CD4-positive, alpha-beta T cell (primary cell): ENCODE measurements at regions of chr6 and their contacts with region 1.

Region 1: DNA sequence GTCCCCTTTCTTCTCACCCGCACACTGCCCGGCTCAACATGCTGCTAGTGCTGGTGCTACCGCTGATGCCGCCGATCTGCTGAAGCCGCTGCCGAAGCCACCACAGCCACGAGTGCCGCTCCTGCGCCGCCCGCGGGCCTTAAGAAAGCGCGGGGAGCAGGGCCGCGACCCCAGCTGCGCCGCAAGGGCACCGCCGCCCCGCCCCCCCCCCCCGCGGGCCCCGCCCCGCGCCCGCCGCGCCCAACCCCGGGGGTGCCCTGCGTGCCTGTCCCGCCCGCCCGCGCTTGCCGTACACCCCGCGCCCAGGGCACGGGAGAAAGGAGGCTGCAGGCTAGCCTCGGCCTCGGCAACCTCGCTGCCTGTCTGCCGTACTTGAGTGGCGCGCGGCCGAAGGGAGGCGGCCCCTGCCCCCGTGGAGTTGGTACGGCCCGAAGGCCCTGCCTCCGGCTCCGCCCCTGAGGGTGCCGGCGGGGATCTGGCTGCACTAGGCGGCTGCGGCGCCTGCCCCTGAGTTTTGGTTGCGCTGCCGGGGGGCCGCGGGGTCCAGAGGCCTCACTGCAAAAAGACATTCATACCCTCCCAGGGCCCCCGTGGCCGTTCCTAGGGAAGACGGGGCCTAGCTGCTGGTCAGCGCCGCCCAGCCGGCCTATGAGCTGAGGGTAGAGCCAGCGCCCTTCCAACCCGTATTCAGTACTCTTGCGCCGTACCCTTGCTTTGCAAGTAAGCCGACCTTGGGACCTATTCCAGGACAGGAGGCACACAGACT is at the start of gene SOD2:
- DNase-seq: peak; percentile 72 to 93 (median 80)
- ATAC-seq: peak; percentile 69
- H3K4me3 ChIP-seq: peak within 1 kb of the TSS; percentile 90
- H3K4me3 Mint-ChIP-seq: peak within 1 kb of the TSS; percentile 98
- H3K27ac ChIP-seq: peak within 1 kb of the TSS; percentile 76 to 92
- H3K27ac Mint-ChIP-seq: peak within 1 kb of the TSS; percentile 88
- H3K4me1 ChIP-seq: peaks cover 47% of the 10 kb centered on the region
- H3K4me1 Mint-ChIP-seq: peaks cover 51% of the 10 kb centered on the region
- H3K27me3 ChIP-seq: no peaks in the 10 kb centered on the region
- H3K27me3 Mint-ChIP-seq: no peaks in the 10 kb centered on the region
- CTCF ChIP-seq: no peak
- total RNA-seq, gene SOD2: 182 to 195 TPM

Region 2: GRCh38 chr6:159595173-159595572 is 98.1 kb before region 1 on chr6:
- CTCF ChIA-PET with region 1: no interaction called
- POLR2A ChIA-PET with region 1: no interaction called
- intact Hi-C with region 1: no loop called
- DNase-seq: no peak
- ATAC-seq: no peak
- H3K4me3 ChIP-seq: no peak overlapping the region
- H3K4me3 Mint-ChIP-seq: no peak overlapping the region
- H3K27ac ChIP-seq: no peak overlapping the region
- H3K27ac Mint-ChIP-seq: no peak overlapping the region
- H3K4me1 ChIP-seq: no peaks in the 10 kb centered on the region
- H3K4me1 Mint-ChIP-seq: no peaks in the 10 kb centered on the region
- H3K27me3 ChIP-seq: no peaks in the 10 kb centered on the region
- H3K27me3 Mint-ChIP-seq: no peaks in the 10 kb centered on the region
- CTCF ChIP-seq: no peak

Region 3: GRCh38 chr6:159761873-159762680 is 68.8 kb after region 1 on chr6 and contains the start of gene ACAT2:
- CTCF ChIA-PET with region 1: interaction called, 3 read pairs
- POLR2A ChIA-PET with region 1: interaction called, 29 read pairs
- intact Hi-C with region 1: loop called (anchors 2 kb)
- DNase-seq: peak; percentile 80 to 97 (median 90)
- ATAC-seq: peak; percentile 89
- H3K4me3 ChIP-seq: peak within 1 kb of the TSS; percentile 100
- H3K4me3 Mint-ChIP-seq: peak within 1 kb of the TSS; percentile 98
- H3K27ac ChIP-seq: peak within 1 kb of the TSS; percentile 94 to 99
- H3K27ac Mint-ChIP-seq: peak within 1 kb of the TSS; percentile 97
- H3K4me1 ChIP-seq: peaks cover 21% of the 10 kb centered on the region
- H3K4me1 Mint-ChIP-seq: peaks cover 34% of the 10 kb centered on the region
- H3K27me3 ChIP-seq: no peaks in the 10 kb centered on the region
- H3K27me3 Mint-ChIP-seq: no peaks in the 10 kb centered on the region
- CTCF ChIP-seq: no peak
- total RNA-seq, gene ACAT2: 21.4 to 25.8 TPM

Region 4: DNA sequence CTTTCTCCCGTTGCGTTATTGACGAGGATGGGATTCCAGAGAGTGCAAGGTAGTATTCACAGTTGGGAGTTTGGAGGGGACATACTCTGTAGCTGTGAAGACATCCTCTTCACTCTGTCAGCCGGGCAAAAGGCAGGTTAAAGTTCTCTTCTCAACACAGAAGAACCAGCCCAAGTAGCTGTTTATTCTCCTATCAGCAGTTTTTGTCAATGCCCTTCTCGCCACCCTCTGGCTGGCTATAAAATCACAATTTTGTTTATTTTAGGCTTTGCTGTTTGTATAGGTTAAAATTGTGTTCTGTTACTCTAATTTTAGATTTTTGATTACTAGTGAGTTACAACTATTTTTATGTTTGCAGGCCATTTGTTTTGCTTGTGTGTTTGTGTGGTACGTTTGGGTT is 159.6 kb after region 1 on chr6:
- CTCF ChIA-PET with region 1: no interaction called
- POLR2A ChIA-PET with region 1: interaction called, 3 read pairs
- intact Hi-C with region 1: loop called (anchors 2 kb)
- DNase-seq: peak in 7 of 14 experiments; percentile 4 to 53 (median 37)
- ATAC-seq: peak; percentile 67
- H3K4me3 ChIP-seq: no peak overlapping the region
- H3K4me3 Mint-ChIP-seq: no peak overlapping the region
- H3K27ac ChIP-seq: no peak overlapping the region
- H3K27ac Mint-ChIP-seq: no peak overlapping the region
- H3K4me1 ChIP-seq: no peaks in the 10 kb centered on the region
- H3K4me1 Mint-ChIP-seq: peaks cover 4% of the 10 kb centered on the region
- H3K27me3 ChIP-seq: no peaks in the 10 kb centered on the region
- H3K27me3 Mint-ChIP-seq: no peaks in the 10 kb centered on the region
- CTCF ChIP-seq: peak; percentile 43

Region 5: DNA sequence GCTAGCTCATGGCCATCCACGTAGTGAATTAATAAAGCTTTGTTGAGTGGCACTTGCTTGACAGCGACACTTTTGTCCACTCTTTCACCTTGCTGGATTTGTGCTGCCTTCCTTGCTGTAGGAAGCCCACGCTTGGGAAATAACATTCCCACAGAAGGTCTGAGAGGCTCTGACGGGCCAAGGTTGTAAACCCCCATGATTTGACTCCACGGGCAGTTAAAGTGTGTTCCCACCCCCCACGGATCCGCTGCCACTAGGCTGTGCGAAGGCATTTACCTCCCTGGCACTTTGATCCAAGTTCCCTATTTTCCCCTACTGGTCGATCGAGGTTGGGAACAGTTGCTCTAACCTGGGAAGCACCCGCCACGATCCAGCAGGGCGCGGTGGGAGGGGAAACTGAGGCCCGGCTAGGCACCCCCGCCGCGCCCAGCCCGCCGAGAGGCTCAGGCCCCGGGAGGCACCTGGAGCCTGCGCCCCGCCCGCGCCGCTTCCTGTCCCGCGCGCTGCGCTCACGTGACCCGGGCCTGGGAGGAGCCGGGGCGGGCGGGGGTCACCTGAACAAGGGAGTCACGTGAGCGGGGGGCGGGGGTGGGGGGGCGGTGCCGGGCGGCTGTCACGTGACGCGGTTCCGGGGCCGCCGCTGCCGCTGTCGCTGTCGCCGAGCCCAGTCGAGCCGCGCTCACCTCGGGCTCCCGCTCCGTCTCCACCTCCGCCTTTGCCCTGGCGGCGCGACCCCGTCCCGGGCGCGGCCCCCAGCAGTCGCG is 275.3 kb after region 1 on chr6 and contains the start of gene IGF2R:
- CTCF ChIA-PET with region 1: interaction called, 5 read pairs
- POLR2A ChIA-PET with region 1: no interaction called
- intact Hi-C with region 1: loop called in 1 of 2 experiments (anchors 2 kb)
- DNase-seq: peak; percentile 86 to 97 (median 94)
- ATAC-seq: peak; percentile 89
- H3K4me3 ChIP-seq: peak within 1 kb of the TSS; percentile 76
- H3K4me3 Mint-ChIP-seq: peak within 1 kb of the TSS; percentile 98
- H3K27ac ChIP-seq: peak within 1 kb of the TSS; percentile 31 to 42
- H3K27ac Mint-ChIP-seq: peak within 1 kb of the TSS; percentile 91
- H3K4me1 ChIP-seq: peaks cover 41% of the 10 kb centered on the region
- H3K4me1 Mint-ChIP-seq: peaks cover 45% of the 10 kb centered on the region
- H3K27me3 ChIP-seq: no peaks in the 10 kb centered on the region
- H3K27me3 Mint-ChIP-seq: no peaks in the 10 kb centered on the region
- CTCF ChIP-seq: no peak
- total RNA-seq, gene IGF2R: 43.8 to 46.7 TPM

Region 6: GRCh38 chr6:160455541-160456213 is 762.4 kb after region 1 on chr6:
- CTCF ChIA-PET with region 1: no interaction called
- POLR2A ChIA-PET with region 1: no interaction called
- intact Hi-C with region 1: loop called in 1 of 2 experiments (anchors 1 kb)
- DNase-seq: peak; percentile 49 to 80 (median 62)
- ATAC-seq: peak; percentile 98
- H3K4me3 ChIP-seq: no peak overlapping the region
- H3K4me3 Mint-ChIP-seq: no peak overlapping the region
- H3K27ac ChIP-seq: no peak overlapping the region
- H3K27ac Mint-ChIP-seq: no peak overlapping the region
- H3K4me1 ChIP-seq: peaks cover 47% of the 10 kb centered on the region
- H3K4me1 Mint-ChIP-seq: peaks cover 35% of the 10 kb centered on the region
- H3K27me3 ChIP-seq: no peaks in the 10 kb centered on the region
- H3K27me3 Mint-ChIP-seq: peaks cover 29% of the 10 kb centered on the region
- CTCF ChIP-seq: peak; percentile 98

Region 7: DNA sequence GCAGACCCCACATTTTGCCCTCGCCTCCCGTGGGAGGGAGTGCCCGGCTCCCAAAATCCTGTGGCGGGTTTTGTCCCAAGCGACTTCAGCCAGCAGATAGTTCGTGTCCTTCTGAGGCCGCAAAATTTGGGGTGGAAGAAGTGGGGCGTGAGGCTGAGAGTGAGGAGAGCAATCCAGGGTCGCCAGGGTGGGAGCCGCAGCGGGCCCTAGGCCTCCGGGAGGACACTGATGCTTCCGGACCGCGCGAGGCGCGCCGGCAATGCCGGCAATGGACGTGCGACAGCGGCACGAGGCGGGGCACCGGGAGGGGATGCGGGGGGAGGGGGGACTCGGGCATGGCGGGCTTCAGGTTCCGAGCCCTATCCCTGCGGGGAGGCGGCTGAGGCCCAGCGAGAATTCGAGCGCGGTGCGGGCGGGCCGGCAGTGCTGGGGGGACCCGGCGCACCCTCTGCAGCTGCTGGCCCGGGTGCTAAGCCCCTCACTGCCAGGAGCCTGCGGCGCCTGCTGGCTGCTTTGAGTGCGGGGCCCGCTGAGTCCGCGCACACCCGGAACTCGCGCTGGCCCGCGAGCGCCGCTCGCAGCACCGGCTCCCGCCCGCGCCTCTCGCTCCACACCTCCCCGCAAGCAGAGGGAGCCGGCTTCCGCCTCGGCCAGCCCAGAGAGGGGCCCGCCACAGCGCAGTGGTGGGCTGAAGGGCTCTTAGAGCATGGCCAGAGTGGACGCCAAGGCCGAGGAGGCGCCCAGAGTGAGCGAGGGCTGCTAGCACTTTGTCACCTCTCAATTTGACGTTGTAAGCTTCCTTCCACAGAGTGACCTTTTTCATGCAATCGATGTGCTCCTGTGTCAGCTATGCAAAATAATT is 827.0 kb after region 1 on chr6:
- CTCF ChIA-PET with region 1: no interaction called
- POLR2A ChIA-PET with region 1: no interaction called
- intact Hi-C with region 1: loop called in 1 of 2 experiments (anchors 10 kb)
- DNase-seq: peak; percentile 32 to 84 (median 67)
- ATAC-seq: peak; percentile 79
- H3K4me3 ChIP-seq: peak overlapping the region; percentile 83
- H3K4me3 Mint-ChIP-seq: peak overlapping the region; percentile 98
- H3K27ac ChIP-seq: peak overlapping the region; percentile 39 to 69
- H3K27ac Mint-ChIP-seq: peak overlapping the region; percentile 85
- H3K4me1 ChIP-seq: peaks cover 16% of the 10 kb centered on the region
- H3K4me1 Mint-ChIP-seq: peaks cover 34% of the 10 kb centered on the region
- H3K27me3 ChIP-seq: no peaks in the 10 kb centered on the region
- H3K27me3 Mint-ChIP-seq: no peaks in the 10 kb centered on the region
- CTCF ChIP-seq: peak; percentile 62